ENCODE measurements at regions of chr5 and their contacts with region 1.

Region 1: DNA sequence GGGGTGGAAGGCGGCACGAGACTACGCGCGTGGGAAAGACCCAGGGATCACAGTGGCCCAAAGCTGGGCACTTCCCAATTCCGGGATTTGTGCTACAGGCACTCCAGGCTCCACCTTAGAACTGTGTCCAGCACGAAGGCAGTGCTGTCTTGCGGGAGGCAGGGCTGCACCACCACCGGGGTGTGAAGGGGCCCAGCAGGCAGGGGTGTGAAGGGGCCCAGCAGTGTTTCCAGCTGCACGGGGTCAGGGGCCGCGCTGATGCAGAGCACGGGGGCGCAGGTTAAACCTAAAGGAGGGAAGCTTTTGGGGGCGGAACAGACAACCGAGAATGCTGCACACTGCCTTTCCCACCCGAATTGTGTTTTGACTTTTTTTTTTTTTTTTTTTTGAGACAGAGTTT is 1.1 kb upstream of the PDCD6 start:
- DNase-seq: no peak
- ATAC-seq: no peak
- H3K4me3 Mint-ChIP-seq: peak overlapping the region; percentile 92
- H3K27ac Mint-ChIP-seq: peak overlapping the region; percentile 12
- H3K4me1 Mint-ChIP-seq: peaks cover 20% of the 10 kb centered on the region
- H3K27me3 Mint-ChIP-seq: no peaks in the 10 kb centered on the region
- CTCF ChIP-seq: no peak

Region 2: GRCh38 chr5:130601-131131 is 139.7 kb before region 1 on chr5:
- CTCF ChIA-PET with region 1: no interaction called
- POLR2A ChIA-PET with region 1: no interaction called
- intact Hi-C with region 1: no loop called
- DNase-seq: no peak
- ATAC-seq: no peak
- H3K4me3 Mint-ChIP-seq: no peak overlapping the region
- H3K27ac Mint-ChIP-seq: no peak overlapping the region
- H3K4me1 Mint-ChIP-seq: no peaks in the 10 kb centered on the region
- H3K27me3 Mint-ChIP-seq: peaks cover 10% of the 10 kb centered on the region
- CTCF ChIP-seq: no peak

Region 3: GRCh38 chr5:217860-218456 is 52.4 kb before region 1 on chr5 and contains the starts of genes CCDC127 and SDHA:
- CTCF ChIA-PET with region 1: no interaction called
- POLR2A ChIA-PET with region 1: interaction called, 22 read pairs
- intact Hi-C with region 1: loop called (anchors 1 kb)
- DNase-seq: peak; percentile 99
- ATAC-seq: peak; percentile 81
- H3K4me3 Mint-ChIP-seq: peak within 1 kb of the TSS; percentile 91
- H3K27ac Mint-ChIP-seq: peak within 1 kb of the TSS; percentile 85
- H3K4me1 Mint-ChIP-seq: peaks cover 65% of the 10 kb centered on the region
- H3K27me3 Mint-ChIP-seq: no peaks in the 10 kb centered on the region
- CTCF ChIP-seq: no peak
- total RNA-seq, gene CCDC127: 5.7 and 6.4 TPM in 2 replicates
- total RNA-seq, gene SDHA: 90.5 and 95.7 TPM in 2 replicates

Region 4: GRCh38 chr5:285639-286557 is 15.6 kb after region 1 on chr5:
- CTCF ChIA-PET with region 1: no interaction called
- POLR2A ChIA-PET with region 1: interaction called, 14 read pairs
- intact Hi-C with region 1: no loop called
- DNase-seq: no peak
- ATAC-seq: no peak
- H3K4me3 Mint-ChIP-seq: no peak overlapping the region
- H3K27ac Mint-ChIP-seq: no peak overlapping the region
- H3K4me1 Mint-ChIP-seq: peaks cover 53% of the 10 kb centered on the region
- H3K27me3 Mint-ChIP-seq: no peaks in the 10 kb centered on the region
- CTCF ChIP-seq: no peak

Region 5: DNA sequence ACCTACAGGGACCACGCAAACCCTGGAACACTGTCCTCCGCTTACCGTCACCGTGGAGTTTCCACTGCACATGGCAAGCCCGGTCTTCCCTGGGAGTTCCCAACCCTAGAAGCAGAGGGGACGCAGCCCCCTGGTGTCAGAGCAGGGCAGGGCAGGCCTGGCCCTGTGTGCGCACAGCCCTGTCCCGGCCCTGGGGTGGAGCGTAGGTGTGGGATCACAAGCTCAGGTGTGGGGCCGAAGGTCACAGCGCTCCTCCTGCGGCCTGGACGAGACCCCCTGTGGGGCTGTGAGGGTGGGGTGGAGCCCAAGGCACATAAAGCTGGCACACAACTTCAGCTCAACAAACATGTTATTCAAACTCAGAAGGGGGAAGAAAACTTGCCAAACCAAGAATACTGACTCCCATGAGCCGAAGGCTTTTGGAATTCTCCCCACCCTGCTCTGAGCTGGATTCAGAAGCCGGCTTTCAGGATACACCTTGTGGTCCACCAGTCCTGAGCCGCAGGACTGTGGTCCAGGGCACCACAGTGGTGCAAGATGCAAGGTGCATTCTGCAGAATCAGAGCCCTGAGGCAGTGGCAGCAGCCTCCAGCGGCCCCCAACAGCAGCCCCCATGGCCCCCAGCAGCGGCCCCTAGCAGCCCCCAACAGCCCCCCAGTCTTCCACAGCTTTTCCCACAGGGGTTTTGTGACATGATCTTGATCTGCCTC is 160.8 kb after region 1 on chr5:
- CTCF ChIA-PET with region 1: no interaction called
- POLR2A ChIA-PET with region 1: no interaction called
- intact Hi-C with region 1: loop called (anchors 1 kb)
- DNase-seq: peak; percentile 50
- ATAC-seq: peak; percentile 97
- H3K4me3 Mint-ChIP-seq: no peak overlapping the region
- H3K27ac Mint-ChIP-seq: no peak overlapping the region
- H3K4me1 Mint-ChIP-seq: no peaks in the 10 kb centered on the region
- H3K27me3 Mint-ChIP-seq: peaks cover 11% of the 10 kb centered on the region
- CTCF ChIP-seq: no peak

Region 6: DNA sequence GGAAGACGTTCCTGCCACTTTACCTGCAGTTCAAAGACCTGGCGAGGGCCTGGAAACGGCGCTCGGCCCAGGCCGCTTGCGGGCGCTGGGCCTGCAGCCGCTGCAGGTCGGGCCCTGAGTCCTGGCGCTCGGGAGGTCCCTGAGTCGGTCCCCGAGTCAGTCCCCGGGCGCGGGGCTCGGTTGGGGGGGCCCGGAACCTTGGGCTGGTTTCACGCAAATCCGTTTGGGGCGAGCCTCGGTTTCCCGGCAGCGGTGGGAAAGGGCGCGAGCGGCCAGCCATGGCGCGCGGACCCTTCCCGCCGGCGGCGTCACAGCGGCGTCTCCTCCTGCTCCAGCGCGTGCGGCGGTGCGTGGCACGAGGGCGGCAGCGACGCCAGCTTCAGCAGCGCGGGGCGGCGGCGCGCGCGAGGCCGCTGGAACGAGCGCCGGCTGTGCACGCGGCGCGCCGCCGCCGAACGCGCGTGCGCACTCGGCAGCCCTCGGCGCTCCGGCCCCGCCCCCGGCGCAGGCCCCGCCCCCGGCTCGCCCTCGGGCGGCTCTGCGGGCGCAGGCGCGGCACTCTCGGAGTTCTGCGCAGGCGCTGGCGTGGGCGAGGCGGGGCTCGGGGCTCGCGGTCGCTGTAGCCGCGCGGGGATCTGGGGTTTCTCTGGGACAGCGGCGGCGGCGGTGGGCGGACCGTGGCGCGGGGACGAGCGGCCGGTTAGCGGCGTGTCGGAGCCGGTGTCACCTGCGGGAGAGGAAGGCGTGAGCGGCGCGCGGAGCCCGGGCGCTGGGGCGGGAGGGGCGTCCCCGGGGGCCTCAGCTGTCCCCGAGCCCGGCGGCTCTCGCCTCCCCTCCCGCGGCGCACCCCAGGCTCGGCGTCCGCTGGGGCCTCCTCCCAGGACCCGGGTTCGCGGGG is 202.6 kb after region 1 on chr5:
- CTCF ChIA-PET with region 1: no interaction called
- POLR2A ChIA-PET with region 1: interaction called, 5 read pairs
- intact Hi-C with region 1: loop called (anchors 1 kb)
- DNase-seq: peak; percentile 97
- ATAC-seq: peak; percentile 86
- H3K4me3 Mint-ChIP-seq: peak overlapping the region; percentile 78
- H3K27ac Mint-ChIP-seq: peak overlapping the region; percentile 53
- H3K4me1 Mint-ChIP-seq: peaks cover 31% of the 10 kb centered on the region
- H3K27me3 Mint-ChIP-seq: peaks cover 21% of the 10 kb centered on the region
- CTCF ChIP-seq: no peak

Region 7: DNA sequence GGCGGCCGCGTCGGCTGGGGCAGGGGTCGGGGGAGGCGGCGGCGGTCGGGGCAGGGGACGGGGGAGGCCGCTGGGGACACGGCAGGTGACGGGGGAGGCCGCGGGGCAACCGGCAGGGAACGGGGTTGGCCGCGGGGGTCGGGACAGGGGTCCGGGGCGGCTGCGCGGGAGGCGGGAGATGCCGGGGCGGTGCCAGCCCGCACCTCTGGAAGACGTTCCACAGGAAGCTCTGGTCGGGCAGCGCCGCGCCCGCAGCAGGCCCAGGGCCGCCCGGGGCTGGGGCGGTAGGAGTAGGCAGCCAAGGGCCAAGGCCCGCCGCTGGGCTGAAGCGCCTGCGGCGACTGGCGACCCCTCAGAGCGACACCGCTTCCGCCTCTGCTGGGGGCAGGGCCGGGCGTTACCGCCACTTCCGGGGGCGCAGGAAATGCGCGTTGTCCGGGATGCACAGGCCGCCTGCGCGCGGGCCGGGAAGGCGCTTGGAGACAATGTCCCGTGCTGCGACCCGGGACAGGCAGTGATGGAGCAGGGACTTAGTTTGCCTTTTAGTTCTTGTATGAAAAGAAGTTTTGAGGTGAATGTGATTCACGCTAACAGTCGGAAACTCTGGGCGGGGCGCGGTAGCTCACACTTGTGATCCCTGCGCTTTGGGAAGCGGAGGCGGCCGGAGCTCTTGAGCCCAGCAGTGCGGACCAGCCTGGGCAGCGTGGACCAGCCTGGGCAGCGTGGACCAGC is 1363.4 kb after region 1 on chr5:
- CTCF ChIA-PET with region 1: no interaction called
- POLR2A ChIA-PET with region 1: no interaction called
- intact Hi-C with region 1: loop called (anchors 5 kb)
- DNase-seq: peak; percentile 81
- ATAC-seq: peak; percentile 94
- H3K4me3 Mint-ChIP-seq: peak overlapping the region; percentile 93
- H3K27ac Mint-ChIP-seq: peak overlapping the region; percentile 93
- H3K4me1 Mint-ChIP-seq: peaks cover 21% of the 10 kb centered on the region
- H3K27me3 Mint-ChIP-seq: no peaks in the 10 kb centered on the region
- CTCF ChIP-seq: no peak